Posterior cingulate gyrus (tissue), 11 donors: ENCODE measurements at regions of chr14 and their contacts with region 1.

Region 1: DNA sequence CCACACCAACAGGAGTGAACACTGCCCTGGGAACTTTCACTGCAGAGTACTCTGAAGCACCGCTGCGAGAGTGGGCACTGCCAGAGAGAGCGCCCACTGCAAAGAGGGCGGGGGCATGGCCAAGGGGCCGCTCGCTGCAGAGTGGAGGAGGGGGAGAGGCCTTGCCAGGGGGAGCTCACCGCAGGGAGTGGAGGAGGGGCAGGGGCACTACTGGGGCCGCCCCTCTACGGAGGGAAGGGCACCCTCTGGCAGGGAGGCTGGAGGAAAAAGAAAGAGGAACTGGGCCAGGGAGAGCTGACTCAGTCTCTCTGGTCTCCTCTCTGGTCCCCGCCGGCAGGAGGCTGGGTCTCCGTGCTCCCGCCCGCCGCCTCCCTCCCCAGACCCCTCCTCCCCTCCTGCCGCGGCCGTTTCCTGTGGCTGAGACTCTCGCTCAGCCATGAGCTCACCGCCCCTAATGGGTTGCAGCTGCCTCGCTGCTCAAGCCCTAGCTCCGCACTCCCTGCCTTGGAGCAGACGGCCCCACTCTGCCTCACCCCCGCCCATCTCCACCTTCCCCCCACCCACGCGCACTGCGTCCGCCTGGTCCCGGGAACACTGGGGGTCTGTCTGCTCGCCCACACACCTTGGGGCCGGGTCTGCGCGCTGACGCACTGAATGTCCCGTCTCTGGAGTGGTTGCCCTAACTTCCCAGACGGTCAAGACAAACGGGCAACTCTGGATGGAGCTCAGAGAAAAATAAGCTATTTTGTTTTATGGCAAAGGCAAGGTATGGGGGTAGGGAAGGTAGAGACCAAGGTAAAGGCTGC is 1.3 kb downstream of the ARHGEF40 start:
- DNase-seq: peak in 9 of 10 donors; percentile 52 to 94 (median 61)

Region 2: GRCh38 chr14:21024585-21025370 is 46.6 kb before region 1 on chr14 and contains the start of gene NDRG2:
- intact Hi-C with region 1: loop called (anchors 5 kb)
- DNase-seq: peak; percentile 53 to 93 (median 68)

Region 3: DNA sequence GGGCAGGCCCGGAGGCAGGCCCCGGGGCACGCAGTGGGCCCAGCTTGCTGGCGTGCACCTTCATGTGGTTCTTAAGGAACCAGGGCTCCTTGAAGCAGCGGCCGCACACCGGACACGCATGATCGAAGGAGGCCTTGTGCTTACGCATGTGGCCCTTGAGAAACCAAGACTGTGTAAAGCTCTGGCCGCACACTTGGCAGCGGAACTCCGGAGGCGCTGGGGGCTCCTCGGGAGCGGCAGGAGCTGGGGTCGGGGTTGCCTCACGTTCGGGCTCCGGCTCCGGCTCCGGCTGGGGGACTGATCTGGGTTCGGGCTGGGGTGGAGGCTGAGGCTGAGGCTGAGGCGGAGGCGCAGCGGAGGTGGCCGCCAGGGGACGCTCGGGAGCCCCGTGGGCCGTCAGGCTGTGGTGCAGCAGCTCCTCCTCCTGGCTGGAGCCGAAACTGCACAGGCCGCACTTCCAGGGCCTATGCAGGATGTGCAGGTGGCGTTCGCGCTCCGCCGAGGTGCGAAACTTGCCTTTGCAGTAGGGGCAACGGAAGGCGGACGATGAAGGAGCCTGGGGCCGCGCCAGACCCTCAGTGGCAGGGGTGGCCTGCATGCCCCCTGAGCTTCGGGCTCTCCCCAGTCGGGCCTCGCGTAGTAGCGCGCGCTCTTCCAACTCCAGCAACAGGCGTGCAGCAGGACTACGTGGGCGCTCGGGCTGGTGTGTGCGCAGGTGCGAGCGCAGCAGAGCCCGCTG is 21.0 kb after region 1 on chr14:
- intact Hi-C with region 1: loop called (anchors 1 kb)
- DNase-seq: peak in 9 of 10 donors; percentile 56 to 96 (median 76)

Region 4: DNA sequence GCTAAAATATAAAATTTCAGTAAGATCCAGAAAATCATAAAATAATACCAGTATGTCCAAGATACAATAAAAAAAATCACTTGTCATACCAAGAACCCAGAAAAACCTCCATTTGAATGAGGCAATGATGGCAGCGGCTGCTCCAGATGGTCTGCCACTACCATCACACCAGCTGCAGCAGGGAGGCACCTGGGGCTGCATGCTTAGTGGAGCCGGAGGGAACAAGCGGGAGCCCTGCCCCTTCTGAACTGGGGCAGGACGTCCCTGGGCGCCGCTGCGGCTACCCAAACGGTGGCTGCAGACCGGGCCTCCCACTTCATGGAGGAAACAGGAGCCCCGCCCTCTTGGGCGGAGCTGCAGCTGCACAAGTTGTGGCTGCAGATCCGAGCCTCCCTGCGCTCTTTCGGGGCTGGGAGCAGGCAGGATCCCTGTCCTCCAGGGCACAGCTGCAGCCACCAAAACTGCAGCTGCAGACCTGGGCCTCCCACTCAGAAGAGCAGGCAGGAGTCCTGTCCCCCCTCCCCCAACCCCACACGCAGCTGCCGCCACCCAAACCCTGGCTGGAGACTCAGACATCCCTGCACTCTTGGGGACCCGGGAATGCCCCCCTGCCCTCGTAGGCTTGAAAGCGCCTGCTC is 120.5 kb after region 1 on chr14:
- intact Hi-C with region 1: no loop called
- DNase-seq: peak; percentile 29 to 94 (median 60)

Region 5: GRCh38 chr14:21510735-21511657 is 439.6 kb after region 1 on chr14 and contains the start of gene METTL3:
- intact Hi-C with region 1: loop called (anchors 5 kb)
- DNase-seq: peak; percentile 93 to 99 (median 96)